ENCODE measurements at regions of chr15 and their contacts with region 1.

Region 1: GRCh38 chr15:82108489-82109078 is 62.8 kb upstream of the MEX3B start:
- DNase-seq: peak; percentile 15
- ATAC-seq: peak; percentile 98
- H3K4me3 ChIP-seq: no peak overlapping the region
- H3K27ac ChIP-seq: no peak overlapping the region
- H3K4me1 ChIP-seq: no peaks in the 10 kb centered on the region
- H3K27me3 ChIP-seq: no peaks in the 10 kb centered on the region
- CTCF ChIP-seq: peak; percentile 95 to 97 (median 97)
- POLR2A ChIP-seq: no peak
- RAD21 ChIP-seq: peak; percentile 92

Region 2: DNA sequence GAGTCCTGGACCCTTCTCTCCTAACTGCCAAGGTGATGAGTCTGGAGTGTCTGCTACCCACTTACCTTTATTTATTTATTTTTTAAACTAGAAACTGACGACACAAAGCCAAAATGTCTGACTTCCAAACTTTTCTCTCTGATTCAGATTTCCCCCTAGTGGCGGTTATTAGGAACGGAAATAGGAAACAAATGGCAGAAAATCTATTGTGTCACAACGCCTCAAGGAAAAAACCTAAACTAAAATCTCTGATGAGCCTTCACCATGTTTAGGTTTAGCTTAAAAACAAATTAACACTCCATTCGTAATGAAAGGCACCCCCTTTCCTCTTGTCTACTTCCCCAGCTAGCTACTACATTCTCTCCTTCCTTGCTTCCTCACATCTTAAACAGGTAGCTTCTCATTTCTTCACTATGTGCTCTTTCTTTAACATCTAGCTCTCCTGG is 31.3 kb after region 1 on chr15:
- CTCF ChIA-PET with region 1: interaction called, 16 read pairs
- POLR2A ChIA-PET with region 1: no interaction called
- RAD21 ChIA-PET with region 1: interaction called in 1 of 2 experiments, 3 read pairs
- intact Hi-C with region 1: loop called (anchors 2 kb)
- DNase-seq: peak; percentile 33
- ATAC-seq: peak; percentile 63
- H3K4me3 ChIP-seq: no peak overlapping the region
- H3K27ac ChIP-seq: no peak overlapping the region
- H3K4me1 ChIP-seq: no peaks in the 10 kb centered on the region
- H3K27me3 ChIP-seq: no peaks in the 10 kb centered on the region
- CTCF ChIP-seq: peak; percentile 71 to 74 (median 74); a peak in 5 of 6 replicates
- POLR2A ChIP-seq: no peak
- RAD21 ChIP-seq: peak; percentile 70

Region 3: DNA sequence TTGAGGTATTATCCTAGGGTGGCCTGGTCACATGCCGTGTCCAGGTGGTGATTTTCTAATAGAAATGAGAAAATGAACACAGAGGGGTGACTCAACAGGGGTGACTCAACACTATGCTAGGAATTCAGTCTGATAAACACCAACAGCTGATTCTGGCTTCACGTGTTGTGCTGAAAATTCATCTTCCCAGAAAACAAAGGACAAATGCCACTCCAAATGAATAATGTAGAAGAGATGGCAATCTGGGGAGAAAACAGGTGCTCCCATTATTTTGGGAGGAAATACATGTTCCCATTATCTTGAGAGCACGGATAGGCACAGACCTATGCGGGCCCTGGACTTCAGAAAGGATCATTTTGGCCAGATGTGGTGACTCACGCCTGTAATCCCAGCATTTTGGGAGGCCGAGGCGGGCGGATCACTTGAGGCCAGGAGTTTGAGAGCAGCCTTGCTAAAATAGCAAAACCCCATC is 38.4 kb after region 1 on chr15:
- CTCF ChIA-PET with region 1: interaction called, 10 read pairs
- POLR2A ChIA-PET with region 1: no interaction called
- RAD21 ChIA-PET with region 1: no interaction called
- intact Hi-C with region 1: no loop called
- DNase-seq: peak; percentile 51
- ATAC-seq: peak; percentile 90
- H3K4me3 ChIP-seq: no peak overlapping the region
- H3K27ac ChIP-seq: peak overlapping the region; percentile 29; the same call in 1 of the 2 replicates
- H3K4me1 ChIP-seq: peaks cover 18 to 27% of the 10 kb centered on the region in 2 experiments
- H3K27me3 ChIP-seq: no peaks in the 10 kb centered on the region
- CTCF ChIP-seq: no peak
- POLR2A ChIP-seq: no peak
- RAD21 ChIP-seq: no peak

Region 4: DNA sequence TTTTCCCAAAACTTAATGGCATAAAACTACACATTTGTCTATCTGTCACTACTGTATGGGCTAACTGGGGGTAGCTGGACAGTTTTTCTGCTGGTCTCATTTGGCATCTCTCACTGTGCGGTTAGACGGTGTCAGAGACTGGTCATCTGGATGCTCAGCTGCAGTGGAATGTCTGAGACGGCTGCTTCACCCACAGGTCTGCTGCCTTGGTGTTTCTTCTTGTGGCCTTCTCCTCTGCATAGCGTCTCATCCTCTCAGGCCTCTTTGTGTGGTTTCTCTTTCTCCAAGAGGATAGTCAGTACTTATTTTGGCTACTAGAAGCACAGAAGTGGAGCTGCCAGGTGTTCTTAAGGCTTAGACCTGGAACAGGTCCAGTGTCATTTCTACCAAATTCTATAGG is 285.1 kb after region 1 on chr15:
- CTCF ChIA-PET with region 1: no interaction called
- POLR2A ChIA-PET with region 1: no interaction called
- RAD21 ChIA-PET with region 1: no interaction called
- intact Hi-C with region 1: no loop called
- DNase-seq: no peak
- ATAC-seq: no peak
- H3K4me3 ChIP-seq: no peak overlapping the region
- H3K27ac ChIP-seq: no peak overlapping the region
- H3K4me1 ChIP-seq: no peaks in the 10 kb centered on the region
- H3K27me3 ChIP-seq: no peaks in the 10 kb centered on the region
- CTCF ChIP-seq: no peak
- POLR2A ChIP-seq: no peak
- RAD21 ChIP-seq: no peak

Measured in HCT116 (cell line).